Spleen (tissue), 13 donors: ENCODE measurements at regions of chr7 and their contacts with region 1.

Region 1: DNA sequence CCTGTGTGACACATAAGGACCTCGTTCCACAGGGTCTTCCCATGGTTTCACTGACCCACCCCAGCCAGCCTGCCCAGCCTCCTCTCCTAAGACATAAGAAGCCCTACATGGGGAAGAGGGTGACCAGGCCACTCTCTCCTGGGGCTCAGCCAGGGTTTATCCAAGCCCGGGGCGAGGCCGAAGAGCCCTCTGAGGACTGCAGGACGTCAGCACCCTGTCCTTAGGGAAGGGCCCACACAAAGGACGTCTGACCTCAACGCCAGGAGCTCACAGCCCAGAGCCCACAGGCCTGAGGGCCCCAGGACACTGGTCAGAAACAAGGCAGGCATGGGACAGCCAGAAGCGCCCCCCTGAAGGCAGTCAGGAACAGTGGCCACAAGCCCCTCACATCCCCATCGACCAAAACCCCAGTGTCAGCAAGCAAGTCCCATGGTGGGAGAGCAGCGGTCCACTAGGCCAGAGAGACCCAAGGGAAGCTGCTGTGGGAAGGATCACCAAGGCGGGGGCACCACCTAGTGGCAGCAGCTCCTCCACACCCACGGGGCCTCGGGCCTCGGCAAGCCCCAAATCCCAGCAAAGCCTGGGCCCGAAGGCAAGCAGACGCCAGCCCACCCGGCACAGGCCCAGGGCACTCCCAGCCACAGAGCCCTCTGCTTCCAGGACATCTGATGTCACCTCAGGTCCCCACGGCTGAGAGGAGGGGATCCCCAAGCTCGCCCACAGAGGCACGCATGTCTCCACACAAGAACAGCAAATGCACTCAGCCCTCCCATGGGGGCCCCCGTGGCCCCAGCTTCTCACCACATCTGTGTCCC is 23.4 kb downstream of the MAD1L1 start:
- DNase-seq: peak; percentile 87
- H3K4me3 ChIP-seq: no peak overlapping the region
- H3K27ac ChIP-seq: no peak overlapping the region
- H3K4me1 ChIP-seq: peaks cover 0 to 16% (median under 1%) of the 10 kb centered on the region in 6 donors
- H3K27me3 ChIP-seq: no peaks in the 10 kb centered on the region
- CTCF ChIP-seq: peak; percentile 47 to 88 (median 76)
- POLR2A ChIP-seq: no peak

Region 2: DNA sequence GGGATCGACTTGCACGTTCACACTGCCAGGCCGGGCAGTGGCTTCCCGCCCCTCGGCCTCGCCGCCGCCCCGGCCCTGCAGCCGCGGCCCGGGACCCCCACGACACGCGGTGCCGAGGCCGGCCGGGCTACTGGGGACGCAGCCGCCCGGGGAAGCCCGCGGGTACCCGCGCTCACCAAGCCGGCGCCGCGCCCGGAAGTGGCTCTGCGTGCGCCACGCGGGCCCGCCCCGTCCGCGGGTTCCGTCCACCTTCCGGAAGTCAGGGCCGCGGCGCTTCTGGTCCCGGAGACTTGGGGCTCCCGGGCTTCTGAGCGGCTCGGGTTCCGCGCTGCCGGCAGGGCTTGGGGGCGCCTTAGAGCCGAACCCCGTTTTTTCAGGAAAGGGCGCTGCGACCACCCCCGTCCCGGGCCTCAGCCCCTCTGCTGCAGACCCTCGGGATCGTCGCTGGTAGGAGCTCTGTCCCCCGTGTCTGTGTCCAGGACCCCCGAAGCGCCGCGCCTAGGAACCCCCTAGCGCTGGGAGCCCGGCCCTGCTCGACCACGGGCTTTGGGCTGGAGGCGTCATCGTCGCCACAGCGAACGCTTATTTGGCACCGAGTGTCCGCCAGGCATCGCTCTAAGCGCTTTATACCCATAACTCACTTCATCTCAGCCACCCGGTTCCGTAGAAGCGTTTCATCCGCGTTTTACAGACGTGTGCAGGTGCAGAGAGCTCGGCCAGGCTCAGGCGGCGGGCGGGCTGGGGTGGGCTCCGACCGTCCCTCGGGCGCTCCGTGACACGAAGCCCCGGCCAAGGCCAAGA is 639.3 kb before region 1 on chr7 and contains the start of gene PSMG3:
- intact Hi-C with region 1: loop called (anchors 10 kb)
- DNase-seq: peak; percentile 98
- H3K4me3 ChIP-seq: peak within 1 kb of the TSS; percentile 59 to 97 (median 88)
- H3K27ac ChIP-seq: peak within 1 kb of the TSS; percentile 85 to 99 (median 95)
- H3K4me1 ChIP-seq: peaks cover 15 to 49% (median 37%) of the 10 kb centered on the region in 6 donors
- H3K27me3 ChIP-seq: no peaks in the 10 kb centered on the region
- CTCF ChIP-seq: peak in 6 of 11 experiments; percentile 26 to 42 (median 30)
- POLR2A ChIP-seq: peak in 2 of 3 donors; percentile 26 to 73
- total RNA-seq, gene PSMG3: 18.2 to 41.1 (median 23.0) TPM

Region 3: DNA sequence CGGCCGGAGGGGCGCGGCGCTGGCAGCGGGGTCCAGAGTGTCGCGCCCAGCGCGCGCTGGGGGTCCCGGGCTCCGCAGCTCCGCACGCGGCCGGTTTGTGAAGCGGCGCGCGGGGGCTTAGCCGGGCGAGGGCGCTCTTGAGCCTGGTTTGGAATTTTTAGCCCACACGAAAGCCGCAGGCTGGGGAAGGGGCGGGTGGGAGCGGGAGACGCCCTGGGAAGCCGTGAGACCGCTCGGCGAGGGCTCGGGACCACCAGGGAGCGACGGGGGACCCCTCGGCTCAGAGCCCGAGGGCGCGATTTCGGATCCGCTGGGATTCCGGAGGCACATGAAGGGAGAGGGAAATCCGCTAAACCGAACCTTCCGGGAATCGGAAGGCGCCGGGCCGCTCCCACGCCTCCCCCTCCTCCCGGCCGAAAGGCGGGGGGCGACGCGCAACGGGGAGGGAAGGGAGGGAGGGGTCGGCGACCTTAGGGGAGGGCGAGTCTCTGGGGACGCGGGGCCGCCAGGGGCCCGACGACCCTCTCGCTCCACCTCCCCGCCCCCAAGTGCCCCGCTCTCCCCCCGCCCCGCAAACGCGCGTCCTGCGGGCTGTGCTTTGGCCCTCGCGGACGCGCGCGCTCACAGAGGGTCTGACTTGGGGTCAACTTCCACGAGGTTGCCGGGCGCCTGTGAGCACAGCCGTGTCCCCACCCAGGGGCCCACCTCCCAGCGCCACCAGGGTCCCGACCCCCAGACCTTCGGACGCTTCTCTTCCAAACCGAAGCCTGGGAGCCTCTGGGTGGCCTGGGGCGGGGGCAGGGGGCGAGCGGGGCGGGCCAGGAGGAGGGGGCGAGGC is 544.4 kb before region 1 on chr7:
- intact Hi-C with region 1: no loop called
- DNase-seq: peak; percentile 77
- H3K4me3 ChIP-seq: peak overlapping the region; percentile 45 to 83 (median 64)
- H3K27ac ChIP-seq: peak overlapping the region in 6 of 8 donors; percentile 14 to 77 (median 56)
- H3K4me1 ChIP-seq: peaks cover 16 to 65% (median 59%) of the 10 kb centered on the region in 6 donors
- H3K27me3 ChIP-seq: peaks cover 0 to 88% (median 68%) of the 10 kb centered on the region in 7 donors
- CTCF ChIP-seq: peak in 9 of 11 experiments; percentile 32 to 78 (median 73)
- POLR2A ChIP-seq: no peak

Region 4: GRCh38 chr7:1969459-1970284 is 239.7 kb before region 1 on chr7:
- intact Hi-C with region 1: no loop called
- DNase-seq: peak; percentile 69
- H3K4me3 ChIP-seq: no peak overlapping the region
- H3K27ac ChIP-seq: no peak overlapping the region
- H3K4me1 ChIP-seq: peaks cover 0 to 22% (median 8%) of the 10 kb centered on the region in 6 donors
- H3K27me3 ChIP-seq: no peaks in the 10 kb centered on the region
- CTCF ChIP-seq: no peak
- POLR2A ChIP-seq: no peak

Region 5: DNA sequence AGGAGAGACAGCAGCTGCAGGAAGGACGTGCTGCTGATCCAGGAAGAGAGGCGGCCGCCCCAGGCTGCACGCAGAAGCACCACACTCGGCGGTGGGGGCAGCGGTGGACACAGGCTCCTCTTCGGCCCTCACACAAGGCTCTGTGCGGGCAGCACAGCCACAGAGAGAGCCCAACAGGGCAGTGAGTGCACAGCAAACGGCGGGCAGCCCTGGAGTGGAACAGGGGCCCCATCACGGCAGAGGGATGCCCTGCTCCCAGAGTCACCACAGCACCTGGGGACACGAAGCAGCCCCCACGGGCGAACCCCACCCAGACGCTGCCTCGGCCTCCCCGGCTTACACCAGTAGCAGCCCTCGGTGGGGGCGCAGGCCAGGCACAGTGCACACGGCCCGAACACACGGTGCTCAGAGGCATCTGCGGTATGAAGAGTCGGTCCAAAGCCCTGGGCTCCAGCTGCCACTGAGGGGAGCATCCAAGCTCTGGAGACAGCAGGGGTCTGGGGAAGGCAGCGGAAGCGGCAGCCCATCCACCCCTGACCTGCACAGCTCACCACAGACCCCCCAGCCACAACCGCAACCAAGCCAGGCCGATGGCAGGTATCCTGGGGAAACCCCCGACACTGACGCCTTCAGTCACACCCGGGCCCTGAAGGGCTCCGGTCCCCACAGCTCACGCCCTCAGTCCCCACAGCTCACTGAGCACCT is 49.5 kb after region 1 on chr7:
- intact Hi-C with region 1: no loop called
- DNase-seq: peak; percentile 83
- H3K4me3 ChIP-seq: no peak overlapping the region
- H3K27ac ChIP-seq: peak overlapping the region in 1 of 8 donors; percentile 47
- H3K4me1 ChIP-seq: peaks cover 11 to 43% (median 28%) of the 10 kb centered on the region in 6 donors
- H3K27me3 ChIP-seq: no peaks in the 10 kb centered on the region
- CTCF ChIP-seq: no peak
- POLR2A ChIP-seq: no peak